Activated CD4-positive, alpha-beta T cell treated with anti-CD3 and anti-CD28 coated beads for 36 hours (primary cell): ENCODE measurements at regions of chr4 and their contacts with region 1.

Region 1: DNA sequence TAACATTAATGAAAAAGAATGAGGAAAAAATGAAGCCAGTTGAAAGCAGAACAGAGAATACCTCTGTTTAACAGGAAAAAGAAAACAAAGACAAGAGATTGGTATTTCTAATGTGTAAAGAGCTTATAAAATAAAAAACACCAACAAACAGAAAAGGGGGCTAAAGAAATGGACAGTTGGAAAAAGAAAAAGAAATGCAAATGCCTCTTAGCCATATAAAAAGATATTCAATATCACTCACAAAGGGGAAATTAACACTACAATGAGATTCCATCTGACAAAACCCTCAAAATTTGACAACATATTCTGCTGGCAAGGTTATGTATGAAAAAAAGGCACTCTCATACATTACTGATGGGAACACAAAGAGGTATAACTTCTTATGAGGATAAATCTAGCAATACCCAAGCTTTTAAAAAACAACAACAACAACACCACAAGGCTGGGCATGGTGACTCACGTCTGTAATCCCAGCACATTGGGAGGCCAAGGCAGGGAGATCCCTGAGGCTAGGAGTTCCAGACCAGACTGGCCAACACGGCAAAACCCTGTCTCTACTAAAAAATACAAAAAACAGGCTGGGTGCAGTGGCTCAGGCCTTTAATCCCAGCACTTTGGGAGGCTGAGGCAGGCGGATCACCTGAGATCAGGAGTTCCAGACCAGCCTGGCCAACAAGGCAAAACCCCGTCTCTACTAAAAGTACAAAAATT is 75.8 kb downstream of the FRYL start:
- DNase-seq: no peak
- ATAC-seq: no peak
- H3K4me3 Mint-ChIP-seq: no peak overlapping the region
- H3K27ac Mint-ChIP-seq: no peak overlapping the region
- H3K4me1 Mint-ChIP-seq: peaks cover 40% of the 10 kb centered on the region
- H3K27me3 Mint-ChIP-seq: no peaks in the 10 kb centered on the region

Region 2: DNA sequence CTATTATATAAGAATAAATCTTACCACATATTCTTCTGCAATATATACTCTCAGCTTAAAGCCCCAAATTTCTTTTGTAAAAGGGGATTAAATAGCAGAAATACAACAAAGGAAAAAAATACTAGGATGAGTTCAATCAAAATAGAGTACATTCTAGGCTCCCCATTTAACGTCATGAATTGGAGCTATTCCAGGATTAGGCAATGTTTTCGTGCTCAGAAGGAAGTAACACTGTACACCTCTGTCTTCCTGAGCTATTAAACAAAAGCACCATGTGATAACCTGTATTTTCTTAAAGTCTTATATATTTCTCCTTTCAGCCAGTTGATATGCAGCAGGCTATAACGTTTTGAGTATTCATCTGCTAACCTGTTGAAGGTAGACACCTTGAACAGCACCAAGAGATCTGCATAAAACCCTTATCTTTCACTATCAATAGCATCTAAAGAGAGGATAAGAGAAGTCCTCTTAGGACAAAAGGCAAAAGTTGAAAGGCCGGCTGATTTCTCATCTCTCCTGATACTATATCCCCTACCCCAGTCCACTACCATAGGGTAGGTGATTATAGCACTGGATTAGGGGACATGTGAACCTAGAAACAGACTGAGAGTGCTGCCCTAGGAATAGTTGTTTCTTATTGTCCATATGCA is 466.1 kb before region 1 on chr4:
- CTCF ChIA-PET with region 1: no interaction called
- POLR2A ChIA-PET with region 1: no interaction called
- intact Hi-C with region 1: no loop called
- DNase-seq: no peak
- ATAC-seq: no peak
- H3K4me3 Mint-ChIP-seq: no peak overlapping the region
- H3K27ac Mint-ChIP-seq: no peak overlapping the region
- H3K4me1 Mint-ChIP-seq: peaks cover 12% of the 10 kb centered on the region
- H3K27me3 Mint-ChIP-seq: no peaks in the 10 kb centered on the region

Region 3: DNA sequence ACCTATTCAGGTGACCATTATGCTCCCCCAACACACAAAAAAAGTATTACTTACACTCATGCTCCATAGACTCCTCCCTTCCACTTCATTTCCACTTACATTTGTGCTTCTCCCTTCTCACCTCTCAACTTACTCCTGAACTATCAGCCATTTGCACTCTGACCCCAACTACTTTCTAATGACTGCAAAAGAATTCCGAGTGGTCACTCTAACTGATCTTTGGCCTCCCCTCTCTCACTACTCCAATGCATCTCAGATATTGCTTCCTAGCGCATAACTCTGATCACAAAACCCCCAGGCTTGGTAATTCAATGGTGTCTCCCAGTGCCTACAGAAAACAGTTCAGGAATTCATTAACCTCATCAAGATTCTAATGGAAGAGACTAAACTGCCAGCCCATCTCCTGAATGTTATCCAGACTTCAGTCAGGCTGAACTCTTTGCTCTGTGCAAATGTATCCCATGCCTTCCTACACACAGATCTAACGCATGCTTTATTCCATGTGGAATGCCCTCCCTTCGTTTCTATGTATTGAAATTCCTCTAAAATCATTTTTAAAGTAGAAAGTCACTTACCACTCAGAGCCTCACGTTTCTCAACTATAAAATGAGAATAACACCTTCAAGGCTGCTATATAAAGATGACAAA is 14.7 kb after region 1 on chr4:
- CTCF ChIA-PET with region 1: no interaction called
- POLR2A ChIA-PET with region 1: no interaction called
- intact Hi-C with region 1: no loop called
- DNase-seq: no peak
- ATAC-seq: no peak
- H3K4me3 Mint-ChIP-seq: no peak overlapping the region
- H3K27ac Mint-ChIP-seq: no peak overlapping the region
- H3K4me1 Mint-ChIP-seq: peaks cover 25% of the 10 kb centered on the region
- H3K27me3 Mint-ChIP-seq: no peaks in the 10 kb centered on the region

Region 4: DNA sequence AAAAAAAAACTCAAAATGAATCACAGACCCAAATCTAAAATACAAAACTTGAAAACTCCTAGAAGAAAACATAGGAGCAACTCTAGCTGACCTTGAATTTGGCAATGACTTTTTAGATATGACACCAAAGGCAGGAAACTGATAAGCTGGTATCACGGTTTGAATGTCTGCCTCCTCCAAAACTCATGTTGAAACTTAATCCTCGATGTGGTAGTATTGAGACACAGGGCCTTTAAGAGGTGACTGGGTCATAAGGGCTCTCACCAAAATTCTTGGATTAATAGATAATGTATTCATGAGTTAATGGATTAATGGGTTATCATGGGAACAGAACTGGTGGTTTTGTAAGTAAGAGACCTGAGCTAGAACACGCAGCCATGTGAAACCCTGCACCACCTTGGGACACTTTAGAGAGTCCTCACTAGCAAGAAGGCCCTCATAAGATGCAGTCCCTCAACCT is 35.3 kb after region 1 on chr4:
- CTCF ChIA-PET with region 1: no interaction called
- POLR2A ChIA-PET with region 1: no interaction called
- intact Hi-C with region 1: loop called in 1 of 2 experiments (anchors 5 kb)
- DNase-seq: no peak
- ATAC-seq: peak; percentile 80
- H3K4me3 Mint-ChIP-seq: no peak overlapping the region
- H3K27ac Mint-ChIP-seq: peak overlapping the region; percentile 39
- H3K4me1 Mint-ChIP-seq: peaks cover 77% of the 10 kb centered on the region
- H3K27me3 Mint-ChIP-seq: no peaks in the 10 kb centered on the region